ENCODE measurements at regions of chr2 and their contacts with region 1.

Region 1: DNA sequence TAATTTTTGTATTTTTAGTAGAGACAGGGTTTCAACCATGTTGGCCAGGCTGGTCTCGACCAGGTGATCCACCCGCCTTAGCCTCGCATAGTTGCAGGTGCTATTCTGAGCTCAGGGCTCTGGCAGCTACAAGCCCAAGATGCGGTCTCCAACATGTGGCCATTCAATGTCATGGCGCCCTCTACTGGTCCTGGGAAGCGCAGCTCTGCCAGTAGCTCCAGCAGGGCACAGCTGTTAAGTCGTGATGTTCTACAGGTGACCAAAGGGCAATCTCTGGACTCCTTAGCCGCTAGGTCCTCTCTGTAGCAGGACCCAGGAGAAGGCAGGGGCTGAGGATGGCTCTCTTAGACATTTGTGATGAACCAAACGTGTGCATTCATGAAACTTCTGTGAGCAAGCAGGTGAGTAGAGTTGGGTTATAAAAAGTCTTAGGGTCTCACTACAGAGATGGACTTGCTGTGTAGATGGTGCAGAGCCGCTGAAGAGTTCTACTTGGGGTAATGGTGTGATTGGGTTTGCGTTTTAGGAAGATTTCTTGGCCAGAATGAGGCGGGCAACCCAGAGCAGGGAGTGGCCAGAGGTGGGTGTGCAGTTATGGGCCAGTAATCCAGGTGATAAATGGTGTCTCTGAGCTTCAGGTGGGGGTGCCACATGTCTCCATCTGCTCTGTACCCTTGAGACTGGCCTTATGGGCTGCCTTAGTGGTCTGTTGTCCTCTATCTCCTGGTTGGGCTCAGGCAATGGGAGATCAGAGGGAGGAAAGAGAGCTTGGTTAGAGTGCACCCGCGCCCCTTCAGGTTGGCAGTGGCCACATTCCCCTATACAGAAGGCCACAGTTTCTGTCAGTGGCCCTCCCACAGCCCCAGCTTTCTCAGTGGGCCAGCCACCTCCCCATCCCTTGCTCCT is 31.0 kb downstream of the IL37 start:
- DNase-seq: peak; percentile 19
- ATAC-seq: peak; percentile 100
- H3K4me3 ChIP-seq: no peak overlapping the region
- H3K27ac ChIP-seq: no peak overlapping the region
- H3K4me1 ChIP-seq: no peaks in the 10 kb centered on the region
- H3K27me3 ChIP-seq: 0 out of 4 replicates have a peak, but pooled peaks cover 0 to 6% of the 10 kb centered on the region in 2 experiments
- CTCF ChIP-seq: peak; percentile 93 to 96 (median 95)
- EP300 ChIP-seq: no peak
- POLR2A ChIP-seq: no peak
- RAD21 ChIP-seq: peak; percentile 96

Region 2: DNA sequence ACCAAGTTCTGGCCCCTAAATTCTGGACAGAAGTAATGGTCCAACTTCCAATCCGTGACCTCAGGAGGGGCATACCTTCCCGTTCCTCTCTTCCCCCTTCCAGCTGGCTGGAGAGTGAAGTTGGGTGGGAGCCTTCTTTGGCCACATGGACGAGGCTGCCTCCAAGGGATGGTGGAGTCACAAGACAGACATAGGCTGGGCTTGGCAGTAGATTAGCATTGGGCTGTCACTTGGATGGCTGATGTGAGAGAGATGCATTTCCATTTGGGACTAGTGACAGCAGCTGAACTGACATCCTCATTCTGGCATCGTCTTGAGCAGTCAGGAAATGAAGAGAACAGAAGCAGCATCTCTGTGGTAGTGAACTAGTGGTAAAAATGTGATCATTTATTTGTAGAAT is 208.6 kb before region 1 on chr2:
- CTCF ChIA-PET with region 1: interaction called, 106 read pairs
- POLR2A ChIA-PET with region 1: no interaction called
- RAD21 ChIA-PET with region 1: interaction called, 117 read pairs
- SMC1A ChIA-PET with region 1: interaction called, 14 read pairs
- in situ Hi-C with region 1: no loop called
- intact Hi-C with region 1: no loop called
- DNase-seq: no peak
- ATAC-seq: no peak
- H3K4me3 ChIP-seq: no peak overlapping the region
- H3K27ac ChIP-seq: no peak overlapping the region
- H3K4me1 ChIP-seq: peaks cover under 1% of the 10 kb centered on the region; the same call in 1 of the 2 replicates
- H3K27me3 ChIP-seq: no peaks in the 10 kb centered on the region
- CTCF ChIP-seq: no peak
- EP300 ChIP-seq: no peak
- POLR2A ChIP-seq: no peak
- RAD21 ChIP-seq: no peak

Region 3: GRCh38 chr2:112764071-112765044 is 177.6 kb before region 1 on chr2 and contains the start of gene CKAP2L:
- CTCF ChIA-PET with region 1: interaction called, 32 read pairs
- POLR2A ChIA-PET with region 1: no interaction called
- RAD21 ChIA-PET with region 1: interaction called, 24 read pairs
- SMC1A ChIA-PET with region 1: interaction called, 9 read pairs
- in situ Hi-C with region 1: no loop called
- intact Hi-C with region 1: no loop called
- DNase-seq: peak; percentile 94
- ATAC-seq: peak; percentile 98
- H3K4me3 ChIP-seq: peak within 1 kb of the TSS; percentile 81
- H3K27ac ChIP-seq: peak within 1 kb of the TSS; percentile 80
- H3K4me1 ChIP-seq: peaks cover 3% of the 10 kb centered on the region
- H3K27me3 ChIP-seq: no peaks in the 10 kb centered on the region
- CTCF ChIP-seq: no peak
- EP300 ChIP-seq: peak in 1 of 2 experiments; percentile 37; a peak in 1 of 4 replicates
- POLR2A ChIP-seq: peak; percentile 79
- RAD21 ChIP-seq: no peak; the same call in 1 of the 2 replicates
- polyA plus RNA-seq, gene CKAP2L: 10.5 to 19.7 TPM

Region 4: DNA sequence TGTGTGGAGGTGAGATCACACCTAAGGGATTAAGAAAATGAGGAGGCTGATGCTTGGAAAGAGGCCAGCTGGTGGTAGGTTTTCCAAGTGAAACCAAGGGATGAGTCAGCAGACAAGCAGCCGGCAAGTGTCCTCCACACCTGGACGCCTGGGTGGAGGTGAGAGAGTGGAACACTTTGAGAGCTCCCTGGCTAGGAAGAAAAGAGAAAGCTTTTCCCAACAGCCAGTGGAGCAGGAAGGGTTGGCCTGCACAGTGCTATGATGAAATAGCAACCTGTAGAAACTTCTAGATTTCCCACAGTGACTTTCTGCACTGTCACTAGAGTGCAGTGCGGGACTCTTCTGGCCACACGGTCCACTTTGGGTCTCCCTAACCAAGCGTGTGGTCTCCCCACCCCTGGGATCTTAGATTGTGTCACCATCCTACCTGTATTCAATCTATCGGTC is 50.6 kb before region 1 on chr2:
- CTCF ChIA-PET with region 1: interaction called, 98 read pairs
- POLR2A ChIA-PET with region 1: no interaction called
- RAD21 ChIA-PET with region 1: interaction called, 104 read pairs
- SMC1A ChIA-PET with region 1: interaction called, 40 read pairs
- in situ Hi-C with region 1: no loop called
- intact Hi-C with region 1: no loop called
- DNase-seq: no peak
- ATAC-seq: no peak
- H3K4me3 ChIP-seq: no peak overlapping the region
- H3K27ac ChIP-seq: no peak overlapping the region
- H3K4me1 ChIP-seq: peaks cover 8% of the 10 kb centered on the region
- H3K27me3 ChIP-seq: no peaks in the 10 kb centered on the region
- CTCF ChIP-seq: no peak
- EP300 ChIP-seq: no peak
- POLR2A ChIP-seq: no peak
- RAD21 ChIP-seq: no peak

Region 5: DNA sequence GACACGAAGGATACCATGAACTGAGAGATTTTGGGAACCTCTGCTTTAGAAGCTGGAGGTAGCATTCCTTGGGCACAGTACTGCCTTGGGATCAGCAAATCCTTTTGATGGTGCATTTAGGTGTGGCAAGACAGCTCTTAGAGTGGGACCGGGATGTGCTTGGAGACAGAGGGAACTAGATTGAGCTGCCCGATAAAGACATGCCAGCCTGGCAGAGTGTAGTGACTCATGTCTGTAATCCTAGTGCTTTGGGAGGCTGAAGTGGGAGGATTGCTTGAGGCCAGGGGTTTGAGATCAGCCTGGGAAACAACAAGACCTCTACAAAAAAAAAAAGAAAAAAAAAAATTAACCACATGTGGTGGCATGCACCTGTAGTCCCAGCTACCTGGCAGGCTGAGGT is 13.2 kb before region 1 on chr2:
- CTCF ChIA-PET with region 1: interaction called, 47 read pairs
- POLR2A ChIA-PET with region 1: no interaction called
- RAD21 ChIA-PET with region 1: interaction called, 16 read pairs
- SMC1A ChIA-PET with region 1: interaction called, 10 read pairs
- in situ Hi-C with region 1: no loop called
- intact Hi-C with region 1: no loop called
- DNase-seq: no peak
- ATAC-seq: no peak
- H3K4me3 ChIP-seq: no peak overlapping the region
- H3K27ac ChIP-seq: no peak overlapping the region
- H3K4me1 ChIP-seq: no peaks in the 10 kb centered on the region
- H3K27me3 ChIP-seq: peaks cover 0 to 4% of the 10 kb centered on the region in 2 experiments; a peak in 1 of 4 replicates
- CTCF ChIP-seq: no peak
- EP300 ChIP-seq: no peak
- POLR2A ChIP-seq: no peak
- RAD21 ChIP-seq: no peak

Region 6: DNA sequence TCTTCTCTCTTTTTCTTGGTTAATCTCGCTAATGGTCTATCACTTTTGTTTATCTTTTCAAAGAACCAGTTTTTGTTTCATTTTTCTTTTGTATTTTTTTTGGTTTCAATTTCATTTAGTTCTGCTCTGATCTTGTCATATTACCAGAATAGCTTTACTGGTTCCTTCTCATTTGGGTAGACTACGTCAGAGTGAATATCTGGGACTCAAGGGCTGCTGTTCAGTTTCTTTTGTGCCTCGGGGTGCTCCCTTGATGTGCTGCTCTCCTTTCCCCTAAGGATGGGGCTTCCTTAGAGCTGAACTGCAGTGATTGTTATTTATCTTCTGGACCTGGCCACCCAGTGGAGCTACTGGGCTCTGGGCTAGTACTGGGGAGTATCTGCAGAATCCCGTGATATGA is 156.0 kb after region 1 on chr2:
- CTCF ChIA-PET with region 1: no interaction called
- POLR2A ChIA-PET with region 1: no interaction called
- RAD21 ChIA-PET with region 1: no interaction called
- SMC1A ChIA-PET with region 1: no interaction called
- in situ Hi-C with region 1: no loop called
- intact Hi-C with region 1: no loop called
- DNase-seq: no peak
- ATAC-seq: peak; percentile 65
- H3K4me3 ChIP-seq: no peak overlapping the region
- H3K27ac ChIP-seq: no peak overlapping the region
- H3K4me1 ChIP-seq: no peaks in the 10 kb centered on the region
- H3K27me3 ChIP-seq: no peaks in the 10 kb centered on the region; a peak in 1 of 4 replicates
- CTCF ChIP-seq: no peak
- EP300 ChIP-seq: no peak
- POLR2A ChIP-seq: no peak
- RAD21 ChIP-seq: no peak